ENCODE measurements at regions of chr2 and their contacts with region 1.

Region 1: GRCh38 chr2:144668493-144669110 is 148.7 kb upstream of the ZEB2 start:
- DNase-seq: no peak
- ATAC-seq: no peak
- H3K4me3 ChIP-seq: no peak overlapping the region
- H3K27ac ChIP-seq: no peak overlapping the region
- H3K4me1 ChIP-seq: no peaks in the 10 kb centered on the region
- H3K27me3 ChIP-seq: no peaks in the 10 kb centered on the region; a peak in 1 of 4 replicates
- CTCF ChIP-seq: no peak
- EP300 ChIP-seq: no peak
- POLR2A ChIP-seq: no peak
- RAD21 ChIP-seq: no peak

Region 2: DNA sequence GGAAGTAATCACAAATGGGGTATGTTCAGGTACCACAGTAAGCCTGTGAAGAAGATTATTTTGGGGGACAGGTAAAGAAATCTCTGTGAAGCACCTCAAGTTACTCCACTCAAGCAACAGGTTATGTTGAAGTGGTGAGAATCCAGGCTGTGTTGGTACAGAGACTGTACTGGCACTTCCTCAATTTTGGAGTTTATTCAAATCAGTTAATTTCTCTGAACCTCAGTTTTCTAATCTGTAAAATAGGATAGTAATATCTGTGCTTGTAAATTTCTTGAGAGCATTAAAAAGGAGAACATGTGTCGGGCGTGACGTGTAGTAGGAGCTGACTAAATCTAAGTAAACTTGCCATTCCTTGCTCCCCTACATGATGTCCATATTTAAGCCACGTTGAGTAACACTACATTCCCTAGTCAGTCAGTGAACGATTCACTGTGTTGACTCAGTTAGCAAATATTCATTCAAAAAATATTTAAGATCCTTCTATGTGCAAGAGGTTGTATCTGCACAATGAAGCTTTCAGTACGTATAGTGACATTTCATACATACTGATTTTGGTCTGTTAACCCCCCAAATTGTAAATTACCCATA is 652.9 kb before region 1 on chr2:
- CTCF ChIA-PET with region 1: no interaction called
- POLR2A ChIA-PET with region 1: no interaction called
- RAD21 ChIA-PET with region 1: no interaction called
- SMC1A ChIA-PET with region 1: no interaction called
- in situ Hi-C with region 1: no loop called
- intact Hi-C with region 1: no loop called
- DNase-seq: no peak
- ATAC-seq: no peak
- H3K4me3 ChIP-seq: no peak overlapping the region
- H3K27ac ChIP-seq: no peak overlapping the region
- H3K4me1 ChIP-seq: no peaks in the 10 kb centered on the region
- H3K27me3 ChIP-seq: no peaks in the 10 kb centered on the region
- CTCF ChIP-seq: no peak
- EP300 ChIP-seq: no peak
- POLR2A ChIP-seq: no peak
- RAD21 ChIP-seq: no peak

Region 3: GRCh38 chr2:144682248-144682647 is 13.6 kb after region 1 on chr2:
- CTCF ChIA-PET with region 1: no interaction called
- POLR2A ChIA-PET with region 1: no interaction called
- RAD21 ChIA-PET with region 1: no interaction called
- SMC1A ChIA-PET with region 1: interaction called, 10 read pairs
- in situ Hi-C with region 1: no loop called
- intact Hi-C with region 1: no loop called
- DNase-seq: no peak
- ATAC-seq: no peak
- H3K4me3 ChIP-seq: no peak overlapping the region
- H3K27ac ChIP-seq: no peak overlapping the region
- H3K4me1 ChIP-seq: no peaks in the 10 kb centered on the region
- H3K27me3 ChIP-seq: peaks cover 0 to 2% of the 10 kb centered on the region in 2 experiments; a peak in 1 of 4 replicates
- CTCF ChIP-seq: no peak
- EP300 ChIP-seq: no peak
- POLR2A ChIP-seq: no peak
- RAD21 ChIP-seq: no peak

Measured in GM12878 (cell line).